ENCODE measurements at regions of chr3 and their contacts with region 1.

Region 1: DNA sequence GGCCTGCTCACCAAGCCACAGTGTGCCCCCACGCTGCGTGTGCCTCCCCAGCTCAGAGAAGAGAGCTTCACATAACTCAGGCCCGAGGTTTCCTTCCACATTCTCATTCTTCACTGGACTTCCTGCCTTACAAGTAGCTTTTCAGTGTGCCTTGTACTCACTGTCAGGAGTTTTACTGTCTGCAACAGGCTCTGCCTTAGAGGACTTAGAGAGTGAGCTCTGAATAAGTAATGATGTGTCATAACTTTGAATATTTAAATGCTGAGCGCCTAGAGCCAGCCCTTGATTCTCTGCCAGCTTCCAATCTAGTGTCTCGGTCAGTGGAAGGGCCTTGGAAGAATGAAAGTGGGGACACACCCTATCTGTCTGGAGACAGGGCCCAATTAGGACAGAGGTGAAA is 41.8 kb downstream of the ITGB5 start:
- DNase-seq: peak; percentile 87
- H3K4me3 Mint-ChIP-seq: peak overlapping the region; percentile 12
- H3K27ac Mint-ChIP-seq: peak overlapping the region; percentile 71
- H3K4me1 Mint-ChIP-seq: peaks cover 14% of the 10 kb centered on the region
- H3K27me3 Mint-ChIP-seq: no peaks in the 10 kb centered on the region
- CTCF ChIP-seq: no peak

Region 2: GRCh38 chr3:124786441-124787241 is 58.8 kb before region 1 on chr3:
- CTCF ChIA-PET with region 1: interaction called, 17 read pairs
- POLR2A ChIA-PET with region 1: interaction called, 6 read pairs
- intact Hi-C with region 1: loop called (anchors 5 kb)
- DNase-seq: peak; percentile 41
- H3K4me3 Mint-ChIP-seq: no peak overlapping the region
- H3K27ac Mint-ChIP-seq: peak overlapping the region; percentile 23
- H3K4me1 Mint-ChIP-seq: peaks cover 10% of the 10 kb centered on the region
- H3K27me3 Mint-ChIP-seq: no peaks in the 10 kb centered on the region
- CTCF ChIP-seq: peak; percentile 38

Region 3: DNA sequence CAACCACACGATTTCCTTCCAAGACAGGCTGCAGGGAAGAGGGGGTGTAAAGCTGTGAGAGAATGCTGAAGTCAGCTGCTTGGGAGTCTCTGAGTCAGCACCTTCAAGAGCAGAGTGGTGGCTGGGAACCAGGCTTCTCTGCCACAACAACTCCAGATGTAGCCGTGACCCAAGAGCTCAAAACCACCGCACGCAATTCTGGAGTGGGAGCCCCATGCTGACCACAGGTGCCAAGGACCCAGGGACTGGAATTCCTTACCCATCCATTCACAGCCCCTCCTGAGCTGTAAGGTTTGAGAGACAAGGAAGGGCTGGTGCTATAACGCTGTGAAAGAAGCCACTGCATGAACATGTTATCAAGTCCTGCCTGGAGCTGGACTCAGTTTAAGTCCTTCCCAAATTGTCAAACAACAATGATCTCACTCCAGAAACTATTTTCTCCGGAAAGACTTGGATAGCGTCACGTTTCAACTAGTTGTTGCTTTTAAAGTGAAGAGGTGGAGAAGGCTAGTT is 53.7 kb before region 1 on chr3:
- CTCF ChIA-PET with region 1: interaction called, 17 read pairs
- POLR2A ChIA-PET with region 1: interaction called, 6 read pairs
- intact Hi-C with region 1: loop called (anchors 5 kb)
- DNase-seq: no peak
- H3K4me3 Mint-ChIP-seq: no peak overlapping the region
- H3K27ac Mint-ChIP-seq: no peak overlapping the region
- H3K4me1 Mint-ChIP-seq: peaks cover 28% of the 10 kb centered on the region
- H3K27me3 Mint-ChIP-seq: no peaks in the 10 kb centered on the region
- CTCF ChIP-seq: no peak

Region 4: DNA sequence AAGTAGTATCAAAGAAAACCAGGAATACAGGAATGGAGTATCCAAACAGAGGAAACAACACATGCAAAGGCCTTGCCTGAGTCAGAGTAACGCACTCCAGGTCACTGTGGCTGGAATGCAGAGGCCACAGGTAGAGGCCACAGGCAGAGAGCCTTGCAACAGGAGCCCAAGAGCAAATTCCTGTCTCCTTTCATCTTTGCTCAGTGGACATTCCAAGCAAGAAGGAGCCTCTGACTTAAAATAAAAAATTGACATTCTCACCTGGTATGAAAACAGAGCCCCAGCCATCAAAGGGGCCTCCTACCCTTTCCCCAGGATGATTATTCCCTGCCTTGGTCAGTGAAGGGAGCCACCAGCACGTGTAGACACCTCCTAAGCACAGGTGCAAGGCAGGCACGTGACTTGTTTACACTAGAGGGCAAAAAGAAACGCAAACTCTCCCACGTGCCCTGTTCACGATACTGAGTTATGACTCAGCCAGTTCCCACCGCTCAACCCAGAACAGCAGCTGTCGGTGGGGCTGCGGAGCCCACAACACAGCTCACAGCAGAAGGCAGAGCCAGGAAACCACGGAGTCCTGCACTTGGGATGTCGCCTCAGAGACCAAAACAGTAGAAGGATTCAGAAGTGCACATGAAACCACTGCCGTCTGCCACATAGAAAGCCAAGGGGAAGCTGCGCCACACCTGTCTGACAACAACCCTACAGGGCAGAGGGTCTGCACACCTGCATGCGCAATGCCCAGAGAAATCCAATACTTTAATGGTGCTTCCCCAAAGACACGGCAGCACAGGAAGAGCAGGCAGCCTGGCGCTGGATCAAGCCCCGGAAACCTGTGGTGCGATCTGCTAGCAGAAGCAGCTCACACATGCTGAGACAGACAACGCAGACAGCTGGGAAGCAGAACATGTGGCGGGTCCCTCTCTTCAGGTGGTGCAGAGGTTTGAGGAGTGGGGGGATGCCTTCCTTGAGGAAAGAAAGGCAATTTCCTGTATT is 10.4 kb before region 1 on chr3:
- CTCF ChIA-PET with region 1: interaction called, 7 read pairs
- POLR2A ChIA-PET with region 1: interaction called, 12 read pairs
- intact Hi-C with region 1: no loop called
- DNase-seq: peak; percentile 87
- H3K4me3 Mint-ChIP-seq: peak overlapping the region; percentile 35
- H3K27ac Mint-ChIP-seq: peak overlapping the region; percentile 39
- H3K4me1 Mint-ChIP-seq: peaks cover 51% of the 10 kb centered on the region
- H3K27me3 Mint-ChIP-seq: no peaks in the 10 kb centered on the region
- CTCF ChIP-seq: no peak

Region 5: GRCh38 chr3:124860599-124860998 is 15.2 kb after region 1 on chr3:
- CTCF ChIA-PET with region 1: interaction called, 11 read pairs
- POLR2A ChIA-PET with region 1: interaction called, 11 read pairs
- intact Hi-C with region 1: no loop called
- DNase-seq: peak; percentile 97
- H3K4me3 Mint-ChIP-seq: no peak overlapping the region
- H3K27ac Mint-ChIP-seq: peak overlapping the region; percentile 91
- H3K4me1 Mint-ChIP-seq: peaks cover 19% of the 10 kb centered on the region
- H3K27me3 Mint-ChIP-seq: no peaks in the 10 kb centered on the region
- CTCF ChIP-seq: no peak

Measured in MCF 10A (cell line).